CD8-positive, alpha-beta memory T cell (primary cell): ENCODE measurements at regions of chr17 and their contacts with region 1.

Region 1: DNA sequence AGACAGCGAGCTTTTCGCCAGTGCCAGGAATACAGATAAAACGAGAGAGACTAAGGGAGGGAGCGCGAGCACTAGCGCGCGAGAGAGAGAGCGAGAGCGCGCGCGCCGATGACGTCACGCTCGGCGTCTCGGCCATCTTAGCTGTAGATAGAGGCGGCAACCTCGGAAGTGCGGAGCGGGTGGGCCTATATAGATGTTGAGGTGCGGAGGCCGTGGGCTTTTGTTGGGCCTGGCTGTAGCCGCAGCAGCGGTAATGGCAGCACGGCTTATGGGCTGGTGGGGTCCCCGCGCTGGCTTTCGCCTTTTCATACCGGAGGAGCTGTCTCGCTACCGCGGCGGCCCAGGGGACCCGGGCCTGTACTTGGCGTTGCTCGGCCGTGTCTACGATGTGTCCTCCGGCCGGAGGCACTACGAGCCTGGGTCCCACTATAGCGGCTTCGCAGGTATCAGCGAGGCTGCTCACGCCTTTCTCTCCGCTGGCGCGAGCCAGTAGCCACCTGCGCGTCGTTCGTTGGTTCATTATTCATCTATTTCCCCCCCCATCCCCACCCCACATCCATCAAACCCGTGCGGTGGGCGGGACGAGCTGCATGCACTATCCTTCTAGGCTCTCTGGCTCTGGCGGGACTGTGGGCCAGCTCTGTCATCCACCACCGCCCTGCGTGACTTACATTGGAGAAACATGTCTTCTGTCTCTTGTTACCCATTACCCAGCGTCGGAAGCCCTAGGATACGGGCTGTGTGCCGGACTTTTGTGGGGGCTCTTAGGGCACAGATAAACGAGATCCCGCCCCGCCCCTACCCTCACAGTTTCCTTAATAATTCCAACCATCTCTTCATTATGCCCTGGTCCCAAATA is 795 bp downstream of the CYB5D2 start:
- DNase-seq: peak; percentile 86 to 95 (median 90)
- H3K4me3 ChIP-seq: peak overlapping the region; percentile 65
- H3K4me3 Mint-ChIP-seq: peak overlapping the region; percentile 95 to 100 (median 100)
- H3K27ac ChIP-seq: peak overlapping the region; percentile 95
- H3K27ac Mint-ChIP-seq: peak overlapping the region; percentile 98 to 100 (median 100)
- H3K4me1 ChIP-seq: peaks cover 38% of the 10 kb centered on the region
- H3K4me1 Mint-ChIP-seq: peaks cover 36 to 48% (median 44%) of the 10 kb centered on the region in 3 donors
- H3K27me3 ChIP-seq: no peaks in the 10 kb centered on the region
- H3K27me3 Mint-ChIP-seq: peaks cover 0 to 3% of the 10 kb centered on the region in 2 donors

Region 2: DNA sequence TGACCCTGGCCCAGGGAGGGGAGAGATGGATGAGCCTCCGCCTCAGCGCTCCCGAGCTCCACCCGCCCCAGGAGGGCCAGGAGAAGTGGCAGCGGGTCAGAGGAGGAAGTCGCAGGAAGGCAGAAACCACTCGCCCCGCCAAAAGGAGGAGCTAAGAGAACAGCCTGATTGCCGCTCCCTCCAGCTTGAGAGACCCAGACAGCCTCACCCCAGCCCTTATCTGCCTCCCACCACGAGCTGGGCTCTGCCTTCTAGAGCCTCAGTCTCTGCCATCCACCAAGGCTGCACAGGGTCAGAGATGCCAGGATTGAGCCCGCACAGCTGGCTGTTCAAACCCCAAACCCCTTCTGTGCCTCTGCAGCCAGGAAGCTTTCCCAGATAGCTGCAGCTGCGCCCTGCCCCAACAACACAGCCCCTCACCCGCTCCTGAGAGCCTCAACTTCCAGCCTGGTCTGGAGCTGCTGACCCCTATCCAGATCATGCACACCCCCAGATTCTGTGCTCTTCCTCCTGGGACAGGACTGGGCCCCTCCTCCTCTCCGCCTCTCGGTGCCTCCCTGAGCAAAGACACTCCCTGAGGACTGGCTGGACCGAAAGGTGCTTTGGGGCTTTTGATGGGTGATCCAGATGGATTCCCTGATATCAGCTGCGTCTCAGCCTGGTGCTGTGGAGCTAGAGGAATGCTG is 178.5 kb before region 1 on chr17:
- CTCF ChIA-PET with region 1: no interaction called
- POLR2A ChIA-PET with region 1: interaction called, 13 read pairs
- DNase-seq: peak; percentile 53 to 78 (median 63)
- H3K4me3 ChIP-seq: peak overlapping the region; percentile 78
- H3K4me3 Mint-ChIP-seq: peak overlapping the region; percentile 93 to 97 (median 95)
- H3K27ac ChIP-seq: peak overlapping the region; percentile 84
- H3K27ac Mint-ChIP-seq: peak overlapping the region; percentile 88 to 98 (median 97)
- H3K4me1 ChIP-seq: peaks cover 37% of the 10 kb centered on the region
- H3K4me1 Mint-ChIP-seq: peaks cover 39 to 48% (median 47%) of the 10 kb centered on the region in 3 donors
- H3K27me3 ChIP-seq: no peaks in the 10 kb centered on the region
- H3K27me3 Mint-ChIP-seq: no peaks in the 10 kb centered on the region

Region 3: GRCh38 chr17:4064366-4064765 is 79.4 kb before region 1 on chr17:
- CTCF ChIA-PET with region 1: no interaction called
- POLR2A ChIA-PET with region 1: no interaction called
- DNase-seq: no peak
- H3K4me3 ChIP-seq: no peak overlapping the region
- H3K4me3 Mint-ChIP-seq: no peak overlapping the region
- H3K27ac ChIP-seq: no peak overlapping the region
- H3K27ac Mint-ChIP-seq: no peak overlapping the region
- H3K4me1 ChIP-seq: no peaks in the 10 kb centered on the region
- H3K4me1 Mint-ChIP-seq: no peaks in the 10 kb centered on the region
- H3K27me3 ChIP-seq: no peaks in the 10 kb centered on the region
- H3K27me3 Mint-ChIP-seq: no peaks in the 10 kb centered on the region

Region 4: GRCh38 chr17:4087906-4088693 is 55.7 kb before region 1 on chr17:
- CTCF ChIA-PET with region 1: no interaction called
- POLR2A ChIA-PET with region 1: no interaction called
- DNase-seq: no peak
- H3K4me3 ChIP-seq: no peak overlapping the region
- H3K4me3 Mint-ChIP-seq: no peak overlapping the region
- H3K27ac ChIP-seq: no peak overlapping the region
- H3K27ac Mint-ChIP-seq: peak overlapping the region in 5 of 8 donors; percentile 9 to 85 (median 32)
- H3K4me1 ChIP-seq: no peaks in the 10 kb centered on the region
- H3K4me1 Mint-ChIP-seq: no peaks in the 10 kb centered on the region
- H3K27me3 ChIP-seq: no peaks in the 10 kb centered on the region
- H3K27me3 Mint-ChIP-seq: no peaks in the 10 kb centered on the region

Region 5: DNA sequence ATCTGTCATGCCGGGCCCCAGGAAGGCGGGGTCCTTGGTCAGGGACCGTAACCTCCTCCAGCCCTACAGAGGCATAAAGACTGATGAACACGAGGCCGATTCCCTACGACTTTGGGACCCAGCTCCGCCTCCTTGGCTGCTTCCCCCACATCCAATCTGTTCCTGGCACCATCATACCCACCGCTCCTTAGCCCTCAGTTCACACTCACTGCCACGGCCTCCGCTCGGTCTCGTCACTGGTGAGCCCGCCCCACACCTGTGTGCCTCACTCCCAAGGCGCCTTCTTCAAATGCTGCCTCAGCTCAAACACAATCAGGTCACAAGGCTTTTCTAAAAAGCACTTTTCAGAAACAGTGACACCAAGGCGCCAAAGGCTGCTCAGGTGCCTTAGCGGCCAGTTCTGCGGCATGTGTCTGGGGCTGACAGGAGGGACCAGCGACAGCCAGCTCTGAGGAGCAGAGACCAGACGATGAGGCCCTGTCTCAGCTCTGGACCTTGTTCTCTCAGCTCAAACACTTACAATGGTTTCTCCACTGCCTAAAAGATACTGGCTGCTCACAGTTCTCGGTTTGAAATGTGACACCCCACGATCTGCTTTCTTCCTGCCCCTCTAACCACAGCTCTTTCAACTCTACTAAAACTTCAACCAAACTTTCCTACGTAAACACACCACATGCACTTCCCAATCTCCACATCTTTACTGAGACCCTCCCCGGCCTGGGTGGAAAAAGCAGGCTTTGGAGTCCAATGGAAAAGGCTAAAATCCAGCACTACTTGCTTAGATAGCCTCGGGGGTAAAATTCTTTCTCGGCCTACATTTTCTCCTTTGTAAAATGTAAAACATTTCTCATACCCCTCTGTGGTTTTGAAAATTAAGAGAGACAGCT is 32.4 kb after region 1 on chr17:
- CTCF ChIA-PET with region 1: no interaction called
- POLR2A ChIA-PET with region 1: interaction called, 41 read pairs
- DNase-seq: peak; percentile 16 to 71 (median 64)
- H3K4me3 ChIP-seq: peak overlapping the region; percentile 40
- H3K4me3 Mint-ChIP-seq: peak overlapping the region; percentile 25 to 89 (median 84)
- H3K27ac ChIP-seq: peak overlapping the region; percentile 66
- H3K27ac Mint-ChIP-seq: peak overlapping the region; percentile 77 to 100 (median 98)
- H3K4me1 ChIP-seq: peaks cover 56% of the 10 kb centered on the region
- H3K4me1 Mint-ChIP-seq: peaks cover 45 to 55% (median 48%) of the 10 kb centered on the region in 3 donors
- H3K27me3 ChIP-seq: no peaks in the 10 kb centered on the region
- H3K27me3 Mint-ChIP-seq: no peaks in the 10 kb centered on the region

Region 6: DNA sequence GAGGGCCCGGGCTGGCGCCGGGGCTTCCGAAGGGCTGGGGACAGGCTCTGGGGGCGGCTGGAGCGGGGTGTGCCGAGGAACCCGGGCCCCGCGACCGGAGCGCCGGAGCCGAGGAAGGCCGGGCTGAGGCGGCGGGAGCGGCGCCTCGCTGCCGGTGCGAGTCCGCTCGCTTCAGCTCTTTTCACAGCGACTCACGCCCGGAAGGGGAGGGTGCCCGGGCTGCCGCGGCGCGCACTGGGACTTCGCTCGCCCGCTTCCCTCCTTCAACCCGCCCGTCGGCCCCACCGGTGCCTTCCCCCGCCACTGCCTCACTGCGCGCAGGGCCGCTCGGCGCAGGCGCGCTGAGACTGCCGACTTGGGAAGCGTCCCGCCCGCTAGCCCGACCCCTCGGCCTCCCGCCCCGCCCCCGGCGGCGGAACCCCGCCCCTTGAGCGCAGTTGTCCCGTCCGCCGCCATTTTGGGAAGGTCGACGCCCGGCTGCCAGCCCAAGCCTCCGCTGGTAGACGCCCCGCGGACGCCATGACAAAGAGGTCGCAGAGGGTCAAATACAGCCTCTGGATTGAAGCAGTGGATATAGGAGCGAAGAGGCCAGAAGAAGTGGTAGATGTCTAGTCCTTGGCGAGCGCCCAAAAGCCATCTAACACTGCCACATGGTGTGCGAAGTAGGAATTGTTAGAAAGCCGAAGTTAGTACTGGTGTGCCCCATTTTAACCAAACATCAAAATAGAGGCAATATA is 222.7 kb after region 1 on chr17 and contains the start of gene UBE2G1:
- CTCF ChIA-PET with region 1: no interaction called
- POLR2A ChIA-PET with region 1: interaction called, 14 read pairs
- DNase-seq: peak; percentile 98 to 99 (median 98)
- H3K4me3 ChIP-seq: peak within 1 kb of the TSS; percentile 47
- H3K4me3 Mint-ChIP-seq: peak within 1 kb of the TSS; percentile 82 to 90 (median 87)
- H3K27ac ChIP-seq: peak within 1 kb of the TSS; percentile 81
- H3K27ac Mint-ChIP-seq: peak within 1 kb of the TSS; percentile 79 to 98 (median 96)
- H3K4me1 ChIP-seq: peaks cover 20% of the 10 kb centered on the region
- H3K4me1 Mint-ChIP-seq: peaks cover 26 to 41% (median 34%) of the 10 kb centered on the region in 3 donors
- H3K27me3 ChIP-seq: no peaks in the 10 kb centered on the region
- H3K27me3 Mint-ChIP-seq: peaks cover 0 to 2% of the 10 kb centered on the region in 2 donors
- total RNA-seq, gene UBE2G1: 54.9 to 68.0 TPM

Region 7: GRCh38 chr17:4939796-4940624 is 796.2 kb after region 1 on chr17 and contains the starts of genes RNF167 and SLC25A11:
- CTCF ChIA-PET with region 1: no interaction called
- POLR2A ChIA-PET with region 1: interaction called, 10 read pairs
- DNase-seq: peak; percentile 89 to 99 (median 97)
- H3K4me3 ChIP-seq: peak within 1 kb of the TSS; percentile 97
- H3K4me3 Mint-ChIP-seq: peak within 1 kb of the TSS; percentile 86 to 97 (median 96)
- H3K27ac ChIP-seq: peak within 1 kb of the TSS; percentile 85
- H3K27ac Mint-ChIP-seq: peak within 1 kb of the TSS; percentile 89 to 98 (median 96)
- H3K4me1 ChIP-seq: peaks cover 57% of the 10 kb centered on the region
- H3K4me1 Mint-ChIP-seq: peaks cover 56 to 79% (median 56%) of the 10 kb centered on the region in 3 donors
- H3K27me3 ChIP-seq: no peaks in the 10 kb centered on the region
- H3K27me3 Mint-ChIP-seq: peaks cover 0 to 4% of the 10 kb centered on the region in 2 donors
- total RNA-seq, gene RNF167: 187 to 192 TPM
- total RNA-seq, gene SLC25A11: 90.0 to 101 TPM